GM12878 (cell line): ENCODE measurements at regions of chr1 and their contacts with region 1.

Region 1: GRCh38 chr1:170531758-170532657 is at the start of gene GORAB:
- DNase-seq: peak; percentile 82
- ATAC-seq: peak; percentile 94
- H3K4me3 ChIP-seq: peak within 1 kb of the TSS; percentile 85
- H3K27ac ChIP-seq: peak within 1 kb of the TSS; percentile 99
- H3K4me1 ChIP-seq: no peaks in the 10 kb centered on the region
- H3K27me3 ChIP-seq: no peaks in the 10 kb centered on the region
- CTCF ChIP-seq: no peak
- EP300 ChIP-seq: no peak
- POLR2A ChIP-seq: peak; percentile 93
- RAD21 ChIP-seq: no peak
- polyA plus RNA-seq, gene GORAB: 5.5 to 7.6 TPM

Region 2: GRCh38 chr1:169914531-169914930 is 617.5 kb before region 1 on chr1:
- CTCF ChIA-PET with region 1: no interaction called
- POLR2A ChIA-PET with region 1: no interaction called
- RAD21 ChIA-PET with region 1: no interaction called
- SMC1A ChIA-PET with region 1: interaction called, 3 read pairs
- in situ Hi-C with region 1: loop called (anchors 5 kb)
- intact Hi-C with region 1: no loop called
- DNase-seq: no peak
- ATAC-seq: no peak
- H3K4me3 ChIP-seq: peak overlapping the region; percentile 61
- H3K27ac ChIP-seq: peak overlapping the region; percentile 78
- H3K4me1 ChIP-seq: peaks cover 55% of the 10 kb centered on the region
- H3K27me3 ChIP-seq: no peaks in the 10 kb centered on the region
- CTCF ChIP-seq: no peak
- EP300 ChIP-seq: no peak
- POLR2A ChIP-seq: no peak
- RAD21 ChIP-seq: no peak

Region 3: DNA sequence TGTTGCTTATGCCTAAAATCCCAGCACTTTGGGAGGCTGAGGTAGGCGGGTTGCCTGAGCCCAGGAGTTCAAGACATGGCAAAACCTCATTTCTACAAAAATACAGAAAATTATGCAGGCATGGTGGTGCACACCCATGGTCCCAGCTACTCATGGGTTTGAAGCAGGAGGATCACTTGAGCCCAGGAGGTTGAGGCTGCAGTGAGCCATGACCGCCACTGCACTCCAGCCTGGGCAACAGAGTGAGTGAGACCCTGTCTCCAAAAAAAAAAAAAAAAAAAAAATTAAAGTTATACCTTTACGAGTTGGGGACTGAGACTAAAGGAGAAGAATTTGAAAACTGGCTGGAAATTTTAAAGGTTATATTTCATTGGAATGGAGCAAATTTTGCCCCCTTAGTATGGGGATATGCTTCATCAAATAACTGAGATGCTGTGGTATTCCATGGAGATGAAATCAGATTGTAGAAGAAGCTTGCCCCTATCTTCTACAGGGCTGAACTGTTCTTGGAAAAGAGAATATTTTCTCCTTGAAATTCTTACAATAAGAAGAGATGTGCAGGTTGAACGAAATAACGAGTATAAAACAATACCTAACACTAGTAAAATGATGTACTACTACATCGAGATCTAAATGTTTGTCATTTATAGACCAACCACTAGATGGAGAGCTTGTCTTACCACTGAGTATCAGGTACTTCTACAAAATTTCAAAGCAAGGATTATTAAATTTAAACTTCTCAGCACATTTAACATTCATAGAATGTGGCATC is 603.4 kb before region 1 on chr1:
- CTCF ChIA-PET with region 1: no interaction called
- POLR2A ChIA-PET with region 1: no interaction called
- RAD21 ChIA-PET with region 1: interaction called, 3 read pairs
- SMC1A ChIA-PET with region 1: no interaction called
- in situ Hi-C with region 1: no loop called
- intact Hi-C with region 1: loop called (anchors 5 kb)
- DNase-seq: no peak
- ATAC-seq: peak; percentile 82
- H3K4me3 ChIP-seq: no peak overlapping the region
- H3K27ac ChIP-seq: no peak overlapping the region
- H3K4me1 ChIP-seq: peaks cover 6% of the 10 kb centered on the region
- H3K27me3 ChIP-seq: no peaks in the 10 kb centered on the region
- CTCF ChIP-seq: peak; percentile 53 to 73 (median 70)
- EP300 ChIP-seq: no peak
- POLR2A ChIP-seq: no peak
- RAD21 ChIP-seq: peak; percentile 88

Region 4: GRCh38 chr1:170221031-170221430 is 311.0 kb before region 1 on chr1:
- CTCF ChIA-PET with region 1: no interaction called
- POLR2A ChIA-PET with region 1: interaction called, 3 read pairs
- RAD21 ChIA-PET with region 1: interaction called, 3 read pairs
- SMC1A ChIA-PET with region 1: no interaction called
- in situ Hi-C with region 1: no loop called
- intact Hi-C with region 1: loop called (anchors 10 kb)
- DNase-seq: no peak
- ATAC-seq: peak; percentile 14; the same call in 1 of the 3 replicates
- H3K4me3 ChIP-seq: no peak overlapping the region
- H3K27ac ChIP-seq: no peak overlapping the region
- H3K4me1 ChIP-seq: no peaks in the 10 kb centered on the region
- H3K27me3 ChIP-seq: no peaks in the 10 kb centered on the region
- CTCF ChIP-seq: no peak
- EP300 ChIP-seq: no peak
- POLR2A ChIP-seq: no peak
- RAD21 ChIP-seq: no peak

Region 5: DNA sequence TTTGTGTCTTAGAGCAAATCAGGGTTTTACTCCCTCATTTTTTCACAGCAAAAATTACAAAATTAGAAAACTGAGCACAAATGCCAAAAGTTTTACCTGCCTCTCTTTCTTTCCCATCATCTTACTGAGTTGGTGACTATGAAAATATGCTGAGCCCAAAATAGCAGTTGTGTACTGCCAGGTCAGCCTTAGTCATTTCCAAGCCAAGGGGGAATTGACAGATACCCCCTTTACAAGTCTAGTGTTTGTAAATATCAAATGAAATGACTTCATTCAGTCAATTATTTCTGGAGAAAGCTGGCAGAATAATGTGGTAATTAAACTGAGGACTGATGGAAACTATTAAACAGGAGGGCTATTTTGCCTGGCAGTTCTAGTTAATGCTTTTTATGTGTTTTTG is 11.4 kb before region 1 on chr1:
- CTCF ChIA-PET with region 1: interaction called, 5 read pairs
- POLR2A ChIA-PET with region 1: interaction called, 5 read pairs
- RAD21 ChIA-PET with region 1: interaction called, 12 read pairs
- SMC1A ChIA-PET with region 1: interaction called, 47 read pairs
- in situ Hi-C with region 1: no loop called
- intact Hi-C with region 1: no loop called
- DNase-seq: no peak
- ATAC-seq: no peak
- H3K4me3 ChIP-seq: no peak overlapping the region
- H3K27ac ChIP-seq: no peak overlapping the region
- H3K4me1 ChIP-seq: no peaks in the 10 kb centered on the region
- H3K27me3 ChIP-seq: no peaks in the 10 kb centered on the region; a peak in 1 of 4 replicates
- CTCF ChIP-seq: no peak
- EP300 ChIP-seq: no peak
- POLR2A ChIP-seq: no peak
- RAD21 ChIP-seq: no peak

Region 6: GRCh38 chr1:170586321-170587252 is 54.6 kb after region 1 on chr1:
- CTCF ChIA-PET with region 1: no interaction called
- POLR2A ChIA-PET with region 1: interaction called, 9 read pairs
- RAD21 ChIA-PET with region 1: interaction called, 9 read pairs
- SMC1A ChIA-PET with region 1: interaction called, 13 read pairs
- in situ Hi-C with region 1: no loop called
- intact Hi-C with region 1: no loop called
- DNase-seq: no peak
- ATAC-seq: peak; percentile 74
- H3K4me3 ChIP-seq: no peak overlapping the region
- H3K27ac ChIP-seq: no peak overlapping the region
- H3K4me1 ChIP-seq: no peaks in the 10 kb centered on the region
- H3K27me3 ChIP-seq: no peaks in the 10 kb centered on the region
- CTCF ChIP-seq: no peak
- EP300 ChIP-seq: no peak
- POLR2A ChIP-seq: no peak
- RAD21 ChIP-seq: no peak

Region 7: DNA sequence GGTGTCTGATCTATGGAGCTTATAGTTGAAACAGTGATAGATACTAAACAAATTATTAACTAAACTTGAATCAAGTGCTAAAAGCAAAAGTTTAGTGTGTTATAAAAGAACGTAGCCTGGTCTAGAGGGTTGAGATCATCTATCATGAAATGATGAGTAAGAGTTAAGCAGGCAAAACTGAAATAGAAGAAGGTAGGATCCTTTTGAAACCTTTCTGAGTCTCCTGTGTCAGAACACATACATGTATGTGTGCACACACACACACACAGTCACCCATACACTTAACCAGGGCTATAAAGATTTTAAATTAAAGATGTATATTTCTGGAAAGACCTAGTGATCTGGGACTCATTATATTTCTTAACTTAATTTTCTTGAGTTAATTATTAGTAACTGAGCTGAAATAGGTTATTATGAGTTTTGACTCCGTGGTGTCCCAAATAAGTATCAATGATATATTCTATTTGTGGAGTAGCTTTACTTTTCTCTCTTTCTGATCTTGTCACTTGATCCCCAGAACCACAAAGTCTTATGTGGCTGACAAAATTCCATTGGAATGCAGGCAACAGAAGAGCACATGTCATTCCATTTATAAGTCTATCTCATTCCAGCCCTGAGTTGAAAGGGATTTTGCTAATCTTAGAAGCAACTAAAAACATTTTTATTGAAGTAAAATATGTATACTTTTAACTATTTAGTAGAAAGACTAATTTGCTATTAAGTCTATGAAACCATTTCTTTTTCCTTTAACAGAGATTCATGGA is 202.6 kb after region 1 on chr1:
- CTCF ChIA-PET with region 1: no interaction called
- POLR2A ChIA-PET with region 1: no interaction called
- RAD21 ChIA-PET with region 1: no interaction called
- SMC1A ChIA-PET with region 1: no interaction called
- in situ Hi-C with region 1: no loop called
- intact Hi-C with region 1: no loop called
- DNase-seq: no peak
- ATAC-seq: no peak
- H3K4me3 ChIP-seq: no peak overlapping the region
- H3K27ac ChIP-seq: no peak overlapping the region
- H3K4me1 ChIP-seq: no peaks in the 10 kb centered on the region
- H3K27me3 ChIP-seq: no peaks in the 10 kb centered on the region
- CTCF ChIP-seq: no peak
- EP300 ChIP-seq: no peak
- POLR2A ChIP-seq: no peak
- RAD21 ChIP-seq: no peak

Region 8: DNA sequence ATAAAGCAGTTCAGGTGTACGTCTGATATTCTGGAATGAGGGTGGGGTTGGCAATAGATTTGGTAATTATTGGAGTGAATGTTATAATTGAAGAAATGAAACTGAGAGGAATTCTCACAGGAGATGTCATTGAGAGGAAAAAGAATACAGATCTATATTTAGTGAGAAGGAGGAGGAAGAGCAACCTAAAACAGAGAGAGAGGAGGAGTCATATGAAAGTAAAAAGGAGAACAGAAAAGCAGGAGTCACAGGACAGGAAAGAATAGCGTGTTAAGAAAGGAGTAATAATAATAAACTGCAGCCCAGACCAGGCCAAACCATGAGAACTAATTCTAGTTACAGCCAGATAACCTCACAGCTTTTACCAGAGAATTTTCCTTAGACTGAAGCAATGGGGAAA is 340.7 kb after region 1 on chr1:
- CTCF ChIA-PET with region 1: no interaction called
- POLR2A ChIA-PET with region 1: no interaction called
- RAD21 ChIA-PET with region 1: no interaction called
- SMC1A ChIA-PET with region 1: no interaction called
- in situ Hi-C with region 1: no loop called
- intact Hi-C with region 1: loop called (anchors 10 kb)
- DNase-seq: peak; percentile 30
- ATAC-seq: peak; percentile 88
- H3K4me3 ChIP-seq: no peak overlapping the region
- H3K27ac ChIP-seq: peak overlapping the region; percentile 46; the same call in 1 of the 2 replicates
- H3K4me1 ChIP-seq: peaks cover 7% of the 10 kb centered on the region
- H3K27me3 ChIP-seq: no peaks in the 10 kb centered on the region
- CTCF ChIP-seq: no peak
- EP300 ChIP-seq: peak; percentile 45 to 60; a peak in 3 of 4 replicates
- POLR2A ChIP-seq: no peak
- RAD21 ChIP-seq: no peak